Activated CD4-positive, alpha-beta T cell treated with anti-CD3 and anti-CD28 coated beads for 36 hours (primary cell): ENCODE measurements at regions of chr1 and their contacts with region 1.

Region 1: DNA sequence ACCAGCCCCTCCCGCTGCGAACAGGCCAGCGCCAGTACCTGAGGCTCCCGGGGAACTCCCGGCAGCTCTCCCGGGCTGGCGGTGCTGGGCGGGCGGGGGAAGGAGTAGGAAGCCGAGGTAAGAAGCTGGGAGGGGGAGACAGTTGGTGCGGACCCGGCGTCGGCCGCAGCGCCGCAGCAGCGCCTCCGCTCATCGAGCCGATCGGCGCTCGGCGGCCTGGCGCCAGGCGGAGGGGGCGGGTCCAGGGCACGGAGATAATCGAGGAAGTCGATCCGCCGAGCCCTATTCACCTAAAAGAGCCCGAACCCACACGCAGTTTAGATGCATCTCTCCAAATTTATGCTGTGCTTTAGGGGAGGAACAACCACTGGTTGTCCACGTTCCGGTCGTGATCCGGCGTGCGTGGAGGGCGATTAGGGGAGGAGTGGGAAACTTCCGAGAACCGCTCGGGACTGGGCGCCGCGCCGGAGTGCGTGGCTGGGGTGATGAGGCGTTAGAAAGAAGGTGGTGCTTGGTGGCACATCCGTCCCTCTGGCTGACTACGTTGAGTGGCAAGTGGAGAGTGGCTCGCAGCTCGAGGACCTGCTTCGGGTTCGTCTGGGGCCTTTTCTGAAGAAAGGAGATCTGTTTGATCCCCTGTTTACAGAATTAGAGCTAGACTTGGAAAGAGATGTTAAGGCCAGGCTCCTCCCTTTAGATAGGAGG is at the start of gene VAMP4:
- DNase-seq: peak; percentile 94
- ATAC-seq: peak; percentile 88
- H3K4me3 Mint-ChIP-seq: peak within 1 kb of the TSS; percentile 92
- H3K27ac Mint-ChIP-seq: peak within 1 kb of the TSS; percentile 99
- H3K4me1 Mint-ChIP-seq: peaks cover 41% of the 10 kb centered on the region
- H3K27me3 Mint-ChIP-seq: no peaks in the 10 kb centered on the region
- total RNA-seq, gene VAMP4: 9.7 to 11.6 TPM

Region 2: DNA sequence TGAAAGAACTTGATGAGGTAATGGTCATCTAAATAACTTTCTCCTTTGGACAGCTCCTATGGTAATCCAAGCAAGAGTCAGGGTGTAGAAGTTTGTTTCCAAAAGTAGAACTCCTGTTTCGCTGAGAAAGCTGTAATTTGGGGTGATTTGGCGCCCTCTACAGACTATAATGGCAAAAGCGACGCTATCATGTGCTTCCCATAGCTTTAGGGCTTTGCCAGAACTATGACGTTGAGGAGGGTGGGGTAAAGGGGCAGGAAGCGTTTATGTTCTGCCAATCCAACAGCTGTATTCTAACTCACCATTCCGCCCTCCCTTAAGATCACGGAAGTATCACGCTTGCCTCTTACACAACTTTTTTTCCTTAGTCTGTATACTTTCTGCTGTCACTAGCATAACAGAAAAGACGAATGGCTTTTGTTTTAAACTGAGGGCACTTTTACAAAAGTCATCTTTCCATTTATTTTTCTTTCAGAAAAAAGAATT is 428.1 kb before region 1 on chr1 and contains the start of gene FMO4:
- CTCF ChIA-PET with region 1: interaction called, 8 read pairs
- POLR2A ChIA-PET with region 1: no interaction called
- intact Hi-C with region 1: loop called in 1 of 2 experiments (anchors 10 kb)
- DNase-seq: peak; percentile 86
- ATAC-seq: peak; percentile 100
- H3K4me3 Mint-ChIP-seq: peak within 1 kb of the TSS; percentile 72
- H3K27ac Mint-ChIP-seq: peak within 1 kb of the TSS; percentile 87
- H3K4me1 Mint-ChIP-seq: peaks cover 14% of the 10 kb centered on the region
- H3K27me3 Mint-ChIP-seq: no peaks in the 10 kb centered on the region
- total RNA-seq, gene FMO4: 1.4 to 2.8 TPM

Region 3: GRCh38 chr1:171501305-171502024 is 240.6 kb before region 1 on chr1:
- CTCF ChIA-PET with region 1: no interaction called
- POLR2A ChIA-PET with region 1: no interaction called
- intact Hi-C with region 1: loop called in 1 of 2 experiments (anchors 5 kb)
- DNase-seq: peak; percentile 24
- ATAC-seq: peak; percentile 80
- H3K4me3 Mint-ChIP-seq: peak overlapping the region; percentile 6
- H3K27ac Mint-ChIP-seq: peak overlapping the region; percentile 75
- H3K4me1 Mint-ChIP-seq: peaks cover 92% of the 10 kb centered on the region
- H3K27me3 Mint-ChIP-seq: no peaks in the 10 kb centered on the region

Region 4: GRCh38 chr1:171654942-171655745 is 86.9 kb before region 1 on chr1:
- CTCF ChIA-PET with region 1: interaction called, 4 read pairs
- POLR2A ChIA-PET with region 1: no interaction called
- intact Hi-C with region 1: loop called (anchors 1 to 5 kb)
- DNase-seq: peak; percentile 90
- ATAC-seq: peak; percentile 93
- H3K4me3 Mint-ChIP-seq: no peak overlapping the region
- H3K27ac Mint-ChIP-seq: no peak overlapping the region
- H3K4me1 Mint-ChIP-seq: peaks cover 8% of the 10 kb centered on the region
- H3K27me3 Mint-ChIP-seq: peaks cover 9% of the 10 kb centered on the region

Region 5: DNA sequence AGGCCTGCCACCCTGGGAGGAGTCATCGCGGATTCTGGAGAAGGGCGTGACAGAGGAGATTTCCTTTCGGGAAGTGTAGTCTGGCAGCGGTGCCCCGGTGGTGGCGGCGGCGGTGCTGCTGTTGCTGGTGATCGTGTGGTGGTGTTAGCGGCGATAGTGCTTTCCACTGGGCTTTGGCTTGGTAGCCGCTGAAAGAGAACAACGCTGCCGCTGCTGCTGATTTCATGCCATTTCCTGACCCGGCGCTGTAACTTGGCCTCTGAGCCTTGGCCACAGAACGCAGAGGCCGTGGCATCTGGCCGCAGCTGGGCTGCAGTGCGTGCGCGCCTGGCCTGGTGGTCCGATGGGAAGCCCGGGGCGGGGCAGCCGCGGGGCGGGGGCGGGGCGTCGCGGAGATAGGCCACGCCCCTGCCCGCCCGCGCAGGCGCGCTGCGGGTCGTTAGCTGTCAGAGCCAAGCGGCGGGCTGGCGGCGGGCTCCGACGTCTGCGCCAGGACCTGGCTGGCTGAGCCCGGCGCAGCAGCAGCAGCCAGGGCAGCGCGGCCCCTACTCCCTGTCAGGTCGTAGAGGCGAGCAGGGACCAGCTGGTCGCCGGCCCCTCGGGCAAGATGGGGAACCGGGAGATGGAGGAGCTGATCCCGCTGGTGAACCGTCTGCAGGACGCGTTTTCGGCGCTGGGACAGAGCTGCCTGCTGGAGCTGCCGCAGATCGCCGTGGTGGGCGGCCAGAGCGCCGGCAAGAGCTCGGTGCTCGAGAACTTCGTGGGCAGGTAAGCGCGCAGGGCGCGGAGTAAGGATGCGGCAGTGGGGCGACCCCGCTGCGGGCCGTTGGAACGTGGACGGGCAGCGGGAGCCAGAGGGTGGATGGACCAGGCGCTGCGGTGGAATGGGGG is 99.3 kb after region 1 on chr1 and contains the start of gene DNM3:
- CTCF ChIA-PET with region 1: no interaction called
- POLR2A ChIA-PET with region 1: interaction called, 3 read pairs
- intact Hi-C with region 1: loop called (anchors 1 to 5 kb)
- DNase-seq: peak; percentile 85
- ATAC-seq: peak; percentile 97
- H3K4me3 Mint-ChIP-seq: peak within 1 kb of the TSS; percentile 84
- H3K27ac Mint-ChIP-seq: peak within 1 kb of the TSS; percentile 77
- H3K4me1 Mint-ChIP-seq: peaks cover 14% of the 10 kb centered on the region
- H3K27me3 Mint-ChIP-seq: peaks cover 17% of the 10 kb centered on the region
- total RNA-seq, gene DNM3: 1.1 to 1.4 TPM

Region 6: DNA sequence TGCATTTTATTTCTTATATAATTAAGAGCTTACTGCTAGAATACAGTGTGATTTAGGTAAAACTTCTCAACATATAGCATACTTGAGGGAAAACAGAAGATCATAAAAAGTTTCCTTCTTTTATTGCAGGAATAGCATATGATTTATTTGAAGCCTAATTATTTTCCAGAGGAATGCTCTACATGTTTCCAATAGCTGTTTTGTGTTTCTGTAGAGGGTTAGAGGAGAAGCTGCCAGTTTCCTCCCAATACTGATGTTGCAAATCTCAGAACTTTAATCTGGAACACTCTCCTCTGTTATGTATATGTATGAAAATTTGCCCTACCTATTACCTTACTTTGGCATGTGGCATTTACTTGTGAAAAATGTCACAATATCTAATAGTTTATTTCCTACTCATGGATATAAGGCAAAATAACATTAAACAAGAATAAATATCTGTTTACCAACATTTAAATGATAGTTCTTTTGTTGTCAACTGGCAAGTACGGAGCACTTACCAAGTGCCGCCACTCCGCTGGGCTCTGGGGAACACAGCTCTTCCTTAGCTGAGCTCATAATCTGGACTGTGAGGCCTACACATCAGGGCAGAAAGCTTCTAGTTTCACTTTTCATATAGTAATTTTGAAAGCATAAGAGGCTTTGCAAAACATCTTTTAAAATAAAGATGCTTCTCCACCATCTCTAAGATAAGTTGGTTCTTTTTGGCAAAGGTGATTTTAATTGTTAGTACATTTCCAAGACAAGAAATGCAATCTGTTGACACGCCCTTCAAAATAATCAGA is 438.7 kb after region 1 on chr1:
- CTCF ChIA-PET with region 1: no interaction called
- POLR2A ChIA-PET with region 1: no interaction called
- intact Hi-C with region 1: loop called in 1 of 2 experiments (anchors 1 kb)
- DNase-seq: peak; percentile 69
- ATAC-seq: peak; percentile 89
- H3K4me3 Mint-ChIP-seq: peak overlapping the region; percentile 66
- H3K27ac Mint-ChIP-seq: peak overlapping the region; percentile 95
- H3K4me1 Mint-ChIP-seq: peaks cover 42% of the 10 kb centered on the region
- H3K27me3 Mint-ChIP-seq: no peaks in the 10 kb centered on the region

Region 7: GRCh38 chr1:172708452-172708851 is 966.4 kb after region 1 on chr1:
- CTCF ChIA-PET with region 1: no interaction called
- POLR2A ChIA-PET with region 1: no interaction called
- intact Hi-C with region 1: loop called in 1 of 2 experiments (anchors 5 kb)
- DNase-seq: peak; percentile 56
- ATAC-seq: peak; percentile 86
- H3K4me3 Mint-ChIP-seq: peak overlapping the region; percentile 37
- H3K27ac Mint-ChIP-seq: peak overlapping the region; percentile 47
- H3K4me1 Mint-ChIP-seq: peaks cover 13% of the 10 kb centered on the region
- H3K27me3 Mint-ChIP-seq: peaks cover 16% of the 10 kb centered on the region